ENCODE measurements at regions of chr7 and their contacts with region 1.

Region 1: DNA sequence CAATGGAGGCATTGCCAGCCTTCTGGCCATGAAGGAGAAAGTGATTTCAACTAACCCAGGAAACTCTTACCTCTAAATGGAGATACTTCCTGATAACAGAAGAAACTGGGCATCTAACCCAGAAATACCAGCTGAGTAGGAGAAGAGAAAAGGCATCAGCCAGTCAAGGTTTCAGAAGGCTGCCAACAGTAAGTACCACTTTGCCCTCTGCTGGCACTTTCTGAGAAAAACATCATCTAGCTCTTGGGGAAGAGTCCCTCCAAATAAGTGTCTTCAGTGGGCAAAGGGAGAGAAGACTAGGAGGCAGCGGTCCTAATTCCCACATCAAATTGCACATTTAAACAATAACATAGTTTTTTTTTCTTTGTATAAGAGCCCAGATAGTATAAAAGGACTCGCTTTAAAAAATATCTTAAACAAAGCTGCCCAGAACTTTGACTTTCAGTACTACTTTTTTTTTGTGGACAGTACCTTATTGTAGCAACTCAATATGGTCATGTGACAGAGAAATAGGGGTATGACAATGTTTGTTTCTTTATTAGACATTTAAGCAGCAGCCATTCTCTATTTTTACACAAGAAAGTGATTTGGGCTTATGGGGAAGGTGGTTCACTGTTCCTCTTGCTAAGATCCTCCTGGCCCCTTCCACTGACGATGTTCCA is 157.3 kb downstream of the CTTNBP2 start:
- DNase-seq: peak; percentile 7
- H3K4me3 ChIP-seq: no peak overlapping the region
- H3K27me3 ChIP-seq: no peaks in the 10 kb centered on the region
- CTCF ChIP-seq: peak; percentile 65

Region 2: GRCh38 chr7:117458977-117459583 is 256.8 kb before region 1 on chr7:
- CTCF ChIA-PET with region 1: interaction called, 29 read pairs
- POLR2A ChIA-PET with region 1: no interaction called
- DNase-seq: peak; percentile 2
- H3K4me3 ChIP-seq: no peak overlapping the region
- H3K27me3 ChIP-seq: no peaks in the 10 kb centered on the region
- CTCF ChIP-seq: peak; percentile 64

Region 3: DNA sequence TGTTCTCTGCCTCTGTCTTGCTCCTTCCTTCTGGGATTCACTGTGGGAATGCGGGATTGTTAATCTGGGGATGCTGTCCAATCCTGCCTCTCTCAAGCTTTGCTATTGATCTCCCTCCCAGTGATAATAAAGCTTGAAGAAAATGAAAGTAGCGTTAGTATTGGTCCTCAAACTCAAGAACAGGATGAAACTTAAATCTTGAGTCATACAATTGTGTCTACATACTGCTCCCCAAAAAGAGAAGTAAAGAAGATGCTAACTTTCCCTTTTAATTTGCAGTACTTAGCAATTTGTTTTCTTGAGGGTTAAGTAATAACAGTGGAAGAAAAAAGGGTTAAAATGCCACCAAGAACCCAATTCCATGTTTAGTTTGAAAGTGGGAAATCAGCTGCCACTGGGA is 222.5 kb before region 1 on chr7:
- CTCF ChIA-PET with region 1: no interaction called
- POLR2A ChIA-PET with region 1: no interaction called
- DNase-seq: no peak
- H3K4me3 ChIP-seq: no peak overlapping the region
- H3K27me3 ChIP-seq: no peaks in the 10 kb centered on the region
- CTCF ChIP-seq: no peak

Region 4: GRCh38 chr7:117731455-117731854 is 15.5 kb after region 1 on chr7:
- CTCF ChIA-PET with region 1: interaction called, 10 read pairs
- POLR2A ChIA-PET with region 1: no interaction called
- DNase-seq: no peak
- H3K4me3 ChIP-seq: no peak overlapping the region
- H3K27me3 ChIP-seq: no peaks in the 10 kb centered on the region
- CTCF ChIP-seq: no peak